ENCODE measurements at regions of chr4 and their contacts with region 1.

Region 1: GRCh38 chr4:118352843-118353533 is at the start of gene PRSS12:
- DNase-seq: peak; percentile 86
- CTCF ChIP-seq: peak; percentile 67

Region 2: DNA sequence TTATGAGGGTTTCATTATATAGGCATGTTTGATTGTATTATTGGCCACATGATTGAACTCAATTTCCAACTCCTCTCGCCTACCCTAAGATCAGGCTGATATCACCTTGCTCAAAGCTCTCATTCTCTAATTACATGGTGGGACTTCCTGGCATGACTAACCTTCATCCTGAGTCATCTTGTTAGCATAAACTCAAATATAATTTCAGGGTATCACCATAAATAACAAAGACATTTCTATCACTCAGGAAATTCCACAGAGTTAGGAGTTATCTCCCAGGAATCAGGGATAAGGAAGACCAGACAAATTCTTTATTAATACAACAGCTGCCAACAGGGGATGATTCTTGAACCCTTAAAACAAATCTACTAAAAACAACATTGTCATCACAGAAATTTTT is 228.0 kb before region 1 on chr4:
- CTCF ChIA-PET with region 1: no interaction called
- POLR2A ChIA-PET with region 1: no interaction called
- DNase-seq: no peak
- CTCF ChIP-seq: no peak

Region 3: DNA sequence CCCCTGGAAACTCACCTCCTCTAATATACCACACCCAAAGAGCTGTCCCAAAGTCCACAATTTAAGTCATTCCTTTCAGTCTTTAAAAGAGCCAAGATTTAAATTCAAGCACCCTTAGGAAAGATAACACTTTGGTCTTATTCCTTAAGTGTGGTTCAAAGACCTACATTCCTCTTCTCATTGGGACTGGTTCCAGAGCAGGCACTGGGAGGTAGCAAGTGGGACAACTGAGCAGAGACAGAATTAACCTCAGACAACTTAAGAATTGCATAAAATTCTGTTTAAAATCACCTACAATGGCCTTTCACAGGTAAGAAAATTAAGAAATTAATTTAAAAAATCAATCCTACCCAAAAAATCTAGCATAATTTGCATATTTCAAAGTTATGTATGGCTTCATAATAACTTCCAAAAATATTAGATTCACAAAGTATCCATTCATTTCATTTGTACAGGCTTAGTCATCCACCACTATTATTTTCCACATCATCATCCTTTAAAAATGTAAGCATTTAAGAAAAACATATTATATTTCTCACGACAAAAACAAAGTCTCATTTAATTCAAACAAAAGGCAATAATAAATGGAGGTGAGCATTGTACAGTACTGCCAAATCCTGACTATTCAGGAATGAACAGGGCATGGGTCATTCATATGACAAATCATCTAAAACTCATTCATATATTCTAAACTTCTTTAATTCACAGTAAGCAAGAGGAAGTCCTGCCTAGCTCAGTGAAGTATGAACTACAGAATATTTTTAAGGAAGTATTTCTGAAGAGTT is 13.8 kb before region 1 on chr4:
- CTCF ChIA-PET with region 1: interaction called, 73 read pairs
- POLR2A ChIA-PET with region 1: no interaction called
- DNase-seq: no peak
- CTCF ChIP-seq: no peak

Region 4: DNA sequence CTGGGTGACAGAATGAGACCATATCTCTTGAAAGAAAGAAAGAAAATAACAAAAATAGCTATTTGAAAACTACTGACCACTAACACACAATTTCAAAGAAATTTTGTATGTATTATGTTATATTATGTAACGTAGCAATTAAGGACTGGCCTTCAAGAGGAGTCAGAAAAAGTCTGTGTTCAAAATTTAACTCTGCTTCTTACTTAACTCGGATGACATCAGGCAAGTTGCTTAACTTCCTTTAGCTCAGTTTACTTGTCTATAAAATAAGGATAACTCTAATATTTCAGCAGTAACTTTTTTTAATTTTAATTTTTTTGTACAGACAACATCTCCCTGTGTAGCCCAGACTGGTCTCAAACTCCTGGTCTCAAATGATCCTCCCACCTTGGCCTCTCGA is 14.4 kb after region 1 on chr4:
- CTCF ChIA-PET with region 1: interaction called, 29 read pairs
- POLR2A ChIA-PET with region 1: no interaction called
- DNase-seq: no peak
- CTCF ChIP-seq: no peak

Measured in GM10248 (cell line).